ENCODE measurements at regions of chr17 and their contacts with region 1.

Region 1: DNA sequence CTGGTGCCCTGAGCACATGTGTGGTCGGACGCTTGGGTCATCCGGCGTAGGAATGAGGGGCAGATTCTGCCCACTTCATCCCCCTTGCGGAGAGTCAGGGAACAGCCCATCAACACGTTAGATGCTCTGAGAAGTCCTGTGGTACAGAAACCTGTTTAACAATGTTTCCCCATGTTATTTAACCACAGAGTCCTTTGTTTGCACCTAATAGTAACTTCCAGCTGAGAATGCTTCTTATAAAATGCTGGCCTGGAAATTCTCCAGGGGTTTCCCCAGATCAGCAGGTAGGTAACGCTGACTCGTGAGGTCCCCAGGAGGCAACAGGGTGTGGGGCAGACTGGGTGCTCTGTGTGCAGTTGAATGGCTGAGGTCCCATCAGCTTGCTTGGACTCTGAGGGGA is 17.8 kb downstream of the DOC2B start:
- DNase-seq: no peak
- H3K4me3 ChIP-seq: no peak overlapping the region
- H3K27ac ChIP-seq: no peak overlapping the region
- H3K4me1 ChIP-seq: no peaks in the 10 kb centered on the region
- H3K27me3 ChIP-seq: no peaks in the 10 kb centered on the region
- CTCF ChIP-seq: no peak
- POLR2A ChIP-seq: no peak

Region 2: DNA sequence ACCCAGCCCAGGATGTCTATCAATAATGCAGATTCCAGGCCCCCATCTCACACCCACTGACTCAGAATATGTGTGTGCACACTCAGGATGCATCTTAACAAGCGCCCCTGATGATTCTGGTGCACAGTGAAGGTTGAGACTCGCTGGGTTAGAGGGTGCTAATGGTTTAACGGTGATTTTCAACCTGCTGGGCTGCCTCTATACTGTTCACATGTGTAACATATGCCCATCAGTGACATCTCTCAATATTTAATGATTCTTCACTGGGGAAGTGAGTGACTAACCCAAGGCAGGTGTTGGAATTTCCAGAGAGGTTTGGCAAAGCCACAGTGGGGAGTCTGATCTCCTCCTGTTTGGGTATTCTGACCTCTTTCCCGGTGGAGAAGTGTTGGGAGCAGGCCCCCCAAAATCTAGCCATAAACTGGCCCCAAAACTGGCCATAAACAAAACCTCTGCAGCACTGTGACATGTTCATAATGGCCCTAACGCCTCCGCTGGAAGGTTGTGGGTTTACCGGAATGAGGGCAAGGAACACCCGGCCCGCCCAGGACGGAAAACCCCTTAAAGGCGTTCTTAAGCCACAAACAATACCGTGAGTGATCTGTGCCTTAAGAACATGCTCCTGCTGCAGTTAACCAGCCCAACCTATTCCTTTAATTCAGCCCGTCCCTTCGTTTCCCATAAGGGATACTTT is 22.0 kb after region 1 on chr17:
- intact Hi-C with region 1: loop called (anchors 2 kb)
- DNase-seq: no peak
- H3K4me3 ChIP-seq: no peak overlapping the region
- H3K27ac ChIP-seq: peak overlapping the region in 1 of 2 donors; percentile 43
- H3K4me1 ChIP-seq: no peaks in the 10 kb centered on the region
- H3K27me3 ChIP-seq: peaks cover 3 to 5% of the 10 kb centered on the region in 2 donors
- CTCF ChIP-seq: no peak
- POLR2A ChIP-seq: no peak